ENCODE measurements at regions of chr11 and their contacts with region 1.

Region 1: GRCh38 chr11:60363542-60364510 is 14.5 kb upstream of the MS4A7 start:
- DNase-seq: peak; percentile 62
- CTCF ChIP-seq: peak; percentile 69

Region 2: GRCh38 chr11:60469723-60470122 is 105.9 kb after region 1 on chr11:
- in situ Hi-C with region 1: loop called (anchors 10 kb)
- DNase-seq: no peak
- CTCF ChIP-seq: no peak

Region 3: DNA sequence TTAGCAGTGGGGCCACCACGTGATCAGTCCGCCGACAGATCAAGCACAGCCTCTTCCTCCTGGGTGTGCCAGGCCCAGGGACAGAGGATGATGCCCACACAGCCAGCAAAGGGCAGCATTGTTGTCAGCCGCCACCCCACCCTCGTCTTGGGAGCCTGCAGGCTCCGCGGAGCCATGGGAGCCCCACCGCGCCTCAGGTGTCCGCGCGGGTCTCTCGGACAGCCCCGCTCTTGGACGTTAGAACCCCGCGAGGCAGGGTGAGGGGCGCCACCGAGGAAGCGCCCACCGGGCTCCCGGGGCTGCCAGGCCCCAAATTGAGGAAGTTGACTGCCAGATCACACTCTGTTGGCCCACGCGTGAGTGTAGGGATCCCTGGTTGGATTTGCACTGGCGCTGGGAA is 251.7 kb after region 1 on chr11:
- in situ Hi-C with region 1: loop called (anchors 10 kb)
- DNase-seq: no peak
- CTCF ChIP-seq: no peak

Region 4: GRCh38 chr11:60762851-60763691 is 399.2 kb after region 1 on chr11:
- in situ Hi-C with region 1: loop called (anchors 25 kb)
- DNase-seq: peak; percentile 68
- CTCF ChIP-seq: peak; percentile 53

Region 5: DNA sequence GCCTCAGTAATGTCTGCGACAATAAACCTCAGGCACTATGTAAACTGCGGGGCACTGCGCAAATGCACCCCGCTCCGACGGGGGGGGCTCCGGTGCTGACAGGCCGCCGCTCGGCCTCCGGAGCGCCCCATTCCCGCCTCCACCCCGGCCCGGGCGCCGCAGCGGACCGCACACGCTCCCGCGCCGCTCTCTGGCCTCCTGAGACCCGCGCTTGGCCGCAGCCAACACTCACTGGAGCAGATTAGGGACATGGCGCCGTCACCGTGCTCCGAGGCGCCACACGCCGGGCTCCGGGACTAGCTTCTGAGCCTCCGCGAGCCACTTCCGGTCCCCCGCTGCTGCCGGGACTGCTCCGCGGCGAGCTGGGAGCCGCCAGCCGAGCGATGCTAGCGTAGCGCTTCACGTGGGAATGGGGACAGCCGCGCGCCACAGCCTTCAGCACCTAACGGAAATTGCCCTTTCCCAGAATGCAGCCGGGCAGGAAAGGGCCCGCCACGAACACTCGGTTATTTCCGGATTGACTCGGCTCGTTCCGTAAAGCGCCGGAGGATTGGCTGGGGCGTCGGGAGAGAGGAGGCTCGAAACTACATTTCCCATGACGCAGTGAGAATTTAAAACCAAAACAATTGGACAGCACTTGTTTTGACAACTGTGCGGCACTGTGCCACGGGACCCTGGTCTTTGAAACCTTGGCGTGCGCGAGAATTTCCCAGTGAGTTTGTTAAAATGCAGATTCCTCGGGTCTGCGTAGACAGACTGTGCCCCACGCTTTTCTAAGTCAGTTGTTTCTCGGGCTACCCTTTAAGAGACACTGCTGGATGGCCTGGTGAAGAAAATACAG is 542.5 kb after region 1 on chr11 and contains the start of gene PRPF19:
- in situ Hi-C with region 1: no loop called
- DNase-seq: peak; percentile 99
- CTCF ChIP-seq: no peak